Vagina (tissue), 2 donors: ENCODE measurements at regions of chr3 and their contacts with region 1.

Region 1: DNA sequence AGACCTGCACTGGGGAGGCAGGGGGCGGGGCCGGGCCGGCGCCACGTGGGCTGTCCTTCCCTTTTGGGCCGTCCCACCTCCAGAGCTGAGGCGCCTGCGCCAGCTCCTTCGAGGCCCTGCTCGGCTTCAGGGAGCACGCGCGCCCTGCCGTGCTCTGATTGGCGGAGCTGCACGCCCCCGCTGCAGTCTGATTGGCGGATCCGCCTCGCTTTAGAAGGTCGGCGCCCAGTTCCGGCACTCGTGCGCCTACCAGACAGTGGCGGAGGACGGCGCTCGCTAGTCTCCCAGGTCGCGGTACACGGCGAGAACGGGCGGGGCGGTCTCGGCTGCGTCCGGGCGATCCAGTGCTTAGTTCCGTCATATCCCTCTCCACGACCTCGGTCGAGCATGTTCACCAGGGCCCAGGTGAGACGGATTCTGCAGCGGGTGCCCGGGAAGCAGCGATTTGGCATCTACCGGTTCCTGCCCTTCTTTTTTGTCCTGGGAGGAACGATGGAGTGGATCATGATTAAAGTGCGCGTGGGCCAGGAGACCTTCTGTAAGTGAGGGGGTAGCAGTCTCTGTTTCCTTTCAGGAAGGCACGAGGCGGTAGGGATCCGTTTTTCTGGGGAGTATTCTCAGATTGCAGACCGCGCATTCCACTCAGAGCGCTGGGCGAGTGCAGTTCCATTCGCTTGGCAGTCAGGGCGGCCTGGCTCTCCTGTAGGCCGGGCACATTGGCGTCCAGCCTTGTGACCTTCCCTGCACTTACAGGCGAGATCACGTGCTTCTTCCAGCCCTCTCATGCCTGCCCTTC is at the start of gene UQCC5:
- DNase-seq: peak; percentile 97 to 99
- H3K4me3 ChIP-seq: peak within 1 kb of the TSS; percentile 67 to 74
- H3K27ac ChIP-seq: peak within 1 kb of the TSS; percentile 92
- H3K4me1 ChIP-seq: peaks cover 86% of the 10 kb centered on the region
- H3K27me3 ChIP-seq: no peaks in the 10 kb centered on the region
- CTCF ChIP-seq: peak in 1 of 3 experiments; percentile 6
- POLR2A ChIP-seq: peak; percentile 89 to 98
- total RNA-seq, gene UQCC5: 1.2 TPM

Region 2: DNA sequence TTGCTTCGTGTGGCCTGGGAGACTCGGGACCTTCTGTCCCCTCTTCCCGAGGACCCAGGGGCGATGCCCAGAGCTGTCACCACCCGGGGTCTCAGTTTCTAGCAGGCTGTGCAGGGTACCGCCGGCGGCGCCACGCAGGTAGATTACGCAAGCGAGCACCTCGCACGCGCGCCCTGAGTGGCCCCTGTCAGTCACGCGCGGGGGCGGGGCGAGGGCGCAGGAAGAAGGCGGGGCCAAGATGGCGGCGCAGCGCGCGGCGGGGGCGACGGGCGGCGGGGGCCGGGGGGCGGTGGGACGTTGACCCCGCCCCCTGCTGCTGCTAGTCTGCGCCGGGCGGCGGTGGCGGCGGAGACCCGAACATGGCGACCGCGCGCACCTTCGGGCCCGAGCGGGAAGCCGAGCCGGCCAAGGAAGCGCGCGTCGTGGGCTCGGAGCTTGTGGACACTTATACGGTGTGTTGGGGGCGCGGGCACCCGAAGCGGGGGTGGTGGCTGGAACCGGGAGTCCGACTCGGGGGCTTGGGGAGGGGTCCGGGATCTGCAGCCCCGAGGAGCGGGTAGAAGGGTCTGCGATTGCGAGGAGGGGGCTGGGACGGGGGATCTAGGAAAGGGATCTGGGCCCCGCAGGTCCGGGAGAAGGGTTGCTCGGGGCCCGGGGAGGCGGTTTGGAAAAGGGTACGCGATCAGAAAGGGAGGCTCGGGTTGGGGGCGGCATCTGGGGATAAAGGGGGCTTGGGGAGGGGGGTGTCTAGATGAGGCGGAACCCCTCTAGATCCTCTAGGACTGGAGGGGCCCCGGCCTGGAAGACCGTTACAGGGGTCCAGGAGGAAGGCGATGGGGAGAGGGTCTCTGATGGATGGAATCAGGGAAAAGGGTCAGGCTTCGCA is 81.0 kb before region 1 on chr3 and contains the start of gene NISCH:
- intact Hi-C with region 1: no loop called
- DNase-seq: no peak
- H3K4me3 ChIP-seq: peak within 1 kb of the TSS; percentile 88 to 92
- H3K27ac ChIP-seq: peak within 1 kb of the TSS; percentile 97
- H3K4me1 ChIP-seq: peaks cover 41% of the 10 kb centered on the region
- H3K27me3 ChIP-seq: no peaks in the 10 kb centered on the region
- CTCF ChIP-seq: no peak
- POLR2A ChIP-seq: peak in 1 of 2 donors; percentile 26
- total RNA-seq, gene NISCH: 103 TPM

Region 3: GRCh38 chr3:52471371-52472238 is 65.0 kb before region 1 on chr3:
- intact Hi-C with region 1: loop called (anchors 10 kb)
- DNase-seq: no peak
- H3K4me3 ChIP-seq: no peak overlapping the region
- H3K27ac ChIP-seq: no peak overlapping the region
- H3K4me1 ChIP-seq: peaks cover 10% of the 10 kb centered on the region
- H3K27me3 ChIP-seq: no peaks in the 10 kb centered on the region
- CTCF ChIP-seq: peak; percentile 38 to 53 (median 51)
- POLR2A ChIP-seq: no peak

Region 4: GRCh38 chr3:52623234-52623792 is 86.7 kb after region 1 on chr3:
- intact Hi-C with region 1: no loop called
- DNase-seq: no peak
- H3K4me3 ChIP-seq: no peak overlapping the region
- H3K27ac ChIP-seq: no peak overlapping the region
- H3K4me1 ChIP-seq: no peaks in the 10 kb centered on the region
- H3K27me3 ChIP-seq: no peaks in the 10 kb centered on the region
- CTCF ChIP-seq: no peak
- POLR2A ChIP-seq: no peak

Region 5: DNA sequence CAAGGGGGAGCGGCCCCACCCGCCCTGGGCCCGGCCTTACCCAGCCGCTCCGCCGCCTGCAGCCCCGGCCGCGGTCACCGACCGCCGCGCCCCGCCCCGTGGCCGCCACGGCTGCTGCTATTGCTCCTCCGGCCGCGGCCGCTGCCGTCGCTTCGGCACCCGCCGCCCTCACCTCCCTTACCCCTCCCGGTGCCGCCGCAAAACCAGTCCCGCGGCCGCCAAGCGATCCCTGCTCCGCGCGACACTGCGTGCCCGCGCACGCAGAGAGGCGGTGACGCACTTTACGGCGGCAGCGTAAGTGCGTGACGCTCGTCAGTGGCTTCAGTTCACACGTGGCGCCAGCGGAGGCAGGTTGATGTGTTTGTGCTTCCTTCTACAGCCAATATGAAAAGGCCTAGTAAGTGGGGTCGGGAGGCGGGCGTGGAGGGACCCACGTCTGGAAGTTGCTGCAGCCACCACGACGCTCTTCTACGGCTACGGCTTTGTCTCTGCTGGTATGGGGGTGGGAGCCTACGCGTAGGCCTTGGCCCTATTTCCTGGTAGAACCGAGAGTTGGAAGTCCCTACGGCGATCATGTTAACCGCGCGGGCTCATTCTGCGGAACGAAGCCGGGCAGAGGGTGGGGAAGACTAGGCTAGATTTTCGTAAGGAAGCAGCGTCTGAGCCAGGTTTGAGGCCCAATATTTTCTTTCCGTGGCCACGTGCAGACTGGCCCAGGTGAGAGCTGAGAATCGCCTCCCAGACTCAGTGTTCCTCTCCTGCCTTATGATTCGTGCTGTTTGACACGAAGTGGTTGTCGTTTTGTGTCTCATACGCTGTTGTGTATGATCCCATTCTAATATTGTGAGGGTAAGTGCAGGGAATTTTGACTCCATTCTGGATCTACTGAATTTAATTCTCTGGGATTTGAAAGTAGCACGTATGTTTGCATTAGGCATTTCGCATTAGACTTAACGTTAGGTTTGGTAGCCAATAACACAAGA is 149.4 kb after region 1 on chr3 and contains the starts of genes GNL3 and PBRM1:
- intact Hi-C with region 1: loop called (anchors 5 kb)
- DNase-seq: peak in 1 of 2 donors; percentile 94
- H3K4me3 ChIP-seq: peak within 1 kb of the TSS; percentile 88 to 93
- H3K27ac ChIP-seq: peak within 1 kb of the TSS; percentile 93
- H3K4me1 ChIP-seq: peaks cover 57% of the 10 kb centered on the region
- H3K27me3 ChIP-seq: no peaks in the 10 kb centered on the region
- CTCF ChIP-seq: no peak
- POLR2A ChIP-seq: peak in 1 of 2 donors; percentile 69
- total RNA-seq, gene GNL3: 73.4 TPM
- total RNA-seq, gene PBRM1: 64.6 TPM